ENCODE measurements at regions of chr17 and their contacts with region 1.

Region 1: GRCh38 chr17:35022536-35023063 is 40.9 kb downstream of the RFFL start:
- DNase-seq: peak; percentile 87
- ATAC-seq: peak; percentile 97
- H3K4me3 ChIP-seq: no peak overlapping the region
- H3K27ac ChIP-seq: peak overlapping the region; percentile 34
- H3K4me1 ChIP-seq: 0 out of 2 replicates have a peak, but pooled peaks cover 2% of the 10 kb centered on the region
- H3K27me3 ChIP-seq: no peaks in the 10 kb centered on the region
- CTCF ChIP-seq: peak; percentile 50
- POLR2A ChIP-seq: peak; percentile 68; the same call in 1 of the 2 replicates
- RAD21 ChIP-seq: peak; percentile 35

Region 2: GRCh38 chr17:35069311-35069710 is 46.7 kb after region 1 on chr17:
- CTCF ChIA-PET with region 1: no interaction called
- POLR2A ChIA-PET with region 1: interaction called, 3 read pairs
- dilution Hi-C with region 1: no loop called
- in situ Hi-C with region 1: no loop called
- intact Hi-C with region 1: loop called (anchors 5 kb)
- DNase-seq: peak; percentile 66
- ATAC-seq: peak; percentile 88
- H3K4me3 ChIP-seq: no peak overlapping the region
- H3K27ac ChIP-seq: no peak overlapping the region
- H3K4me1 ChIP-seq: peaks cover 11% of the 10 kb centered on the region
- H3K27me3 ChIP-seq: no peaks in the 10 kb centered on the region
- CTCF ChIP-seq: no peak
- POLR2A ChIP-seq: no peak
- RAD21 ChIP-seq: no peak

Region 3: GRCh38 chr17:35103271-35103670 is 80.7 kb after region 1 on chr17:
- CTCF ChIA-PET with region 1: no interaction called
- POLR2A ChIA-PET with region 1: no interaction called
- dilution Hi-C with region 1: no loop called
- in situ Hi-C with region 1: no loop called
- intact Hi-C with region 1: no loop called
- DNase-seq: no peak
- ATAC-seq: no peak
- H3K4me3 ChIP-seq: no peak overlapping the region
- H3K27ac ChIP-seq: no peak overlapping the region
- H3K4me1 ChIP-seq: no peaks in the 10 kb centered on the region
- H3K27me3 ChIP-seq: no peaks in the 10 kb centered on the region
- CTCF ChIP-seq: no peak
- POLR2A ChIP-seq: no peak
- RAD21 ChIP-seq: no peak

Measured in IMR-90 (cell line).